OCI-LY7 (cell line): ENCODE measurements at regions of chr7 and their contacts with region 1.

Region 1: GRCh38 chr7:151304856-151305255 is 36.8 kb upstream of the NUB1 start:
- DNase-seq: no peak
- H3K4me3 ChIP-seq: no peak overlapping the region
- H3K27ac ChIP-seq: no peak overlapping the region
- H3K4me1 ChIP-seq: no peaks in the 10 kb centered on the region
- CTCF ChIP-seq: no peak

Region 2: GRCh38 chr7:151223754-151224153 is 81.1 kb before region 1 on chr7:
- CTCF ChIA-PET with region 1: no interaction called
- POLR2A ChIA-PET with region 1: no interaction called
- intact Hi-C with region 1: no loop called
- DNase-seq: no peak
- H3K4me3 ChIP-seq: no peak overlapping the region
- H3K27ac ChIP-seq: no peak overlapping the region
- H3K4me1 ChIP-seq: peaks cover 22% of the 10 kb centered on the region
- CTCF ChIP-seq: 0 out of 2 replicates have a peak, but pooled peaks have one; percentile 22

Region 3: DNA sequence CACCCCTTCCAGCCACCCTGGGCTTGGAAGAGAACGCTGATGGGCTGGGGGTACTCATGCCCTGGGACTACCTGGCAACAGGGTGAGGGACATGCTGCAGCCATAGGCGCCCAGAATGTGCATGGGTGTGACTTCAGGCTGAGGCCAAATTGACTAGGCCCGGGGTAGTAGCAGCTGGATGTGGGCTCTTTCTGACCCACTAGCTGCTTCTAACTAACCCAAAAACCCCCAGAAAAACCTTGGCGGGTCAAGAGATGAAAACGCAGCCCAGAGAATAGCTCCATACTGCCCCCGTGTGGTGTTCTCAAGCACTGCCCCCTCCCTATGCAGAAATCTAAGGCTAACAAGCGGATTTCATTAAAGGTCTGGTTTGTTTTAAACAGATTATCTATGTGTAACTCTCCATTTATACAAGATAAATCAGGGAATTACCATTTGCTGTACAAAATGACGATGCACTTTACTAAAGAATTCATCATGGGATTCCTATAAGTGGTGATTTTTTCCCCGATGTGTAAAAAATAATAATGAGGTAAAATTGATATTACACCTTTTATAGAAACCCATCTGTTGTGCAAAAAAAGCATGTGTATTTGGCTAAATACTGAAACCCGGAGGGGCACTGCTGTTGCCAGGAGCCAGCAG is 60.5 kb before region 1 on chr7:
- CTCF ChIA-PET with region 1: interaction called, 3 read pairs
- POLR2A ChIA-PET with region 1: no interaction called
- intact Hi-C with region 1: loop called (anchors 2 kb)
- DNase-seq: peak; percentile 66
- H3K4me3 ChIP-seq: no peak overlapping the region
- H3K27ac ChIP-seq: no peak overlapping the region
- H3K4me1 ChIP-seq: peaks cover 53% of the 10 kb centered on the region
- CTCF ChIP-seq: peak; percentile 98